Caco-2 (cell line): ENCODE measurements at regions of chr13 and their contacts with region 1.

Region 1: DNA sequence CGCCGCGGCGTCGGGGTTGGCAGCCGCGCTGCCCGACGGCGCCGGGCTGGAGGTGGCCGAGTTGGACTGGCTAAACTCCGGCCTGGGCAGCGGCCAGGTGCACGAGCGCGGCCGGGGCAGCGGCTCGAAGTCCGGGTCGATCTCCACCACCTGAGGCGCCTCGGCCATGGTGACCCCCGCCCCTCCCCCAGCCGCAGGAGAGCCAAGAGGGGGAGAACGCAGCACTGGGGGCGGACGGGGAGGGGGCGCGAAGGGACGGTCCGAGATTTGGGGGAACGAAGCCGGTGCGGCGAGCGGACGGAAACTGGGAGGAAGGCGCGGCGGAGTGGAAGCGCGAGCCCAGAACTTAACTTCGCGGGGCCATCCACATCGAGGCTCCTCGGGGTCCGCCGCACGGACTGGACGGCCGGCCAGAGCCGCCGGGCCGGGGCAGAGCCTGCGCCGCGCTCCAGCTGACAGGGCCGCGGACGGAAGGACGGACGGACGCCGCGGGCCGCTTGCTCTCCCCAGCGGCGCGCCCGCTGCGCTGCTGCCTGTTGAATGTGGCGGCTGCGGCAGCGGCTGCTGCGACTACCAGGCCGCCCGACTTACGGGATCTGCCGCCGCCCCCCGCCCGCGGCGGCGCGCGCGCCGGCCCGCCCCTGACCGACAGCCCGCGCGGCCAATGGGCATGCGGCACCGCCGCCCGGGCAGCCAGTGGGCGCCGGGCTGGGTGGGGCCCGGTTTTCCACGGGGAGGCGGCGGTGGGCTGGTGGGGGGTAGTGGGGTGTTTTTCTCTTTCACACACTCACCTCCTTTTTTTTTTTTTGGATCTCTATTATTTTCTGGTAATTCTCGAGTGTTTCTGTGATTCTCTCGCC is at the start of gene FOXO1:
- DNase-seq: peak; percentile 86 to 97
- H3K4me3 ChIP-seq: peak within 1 kb of the TSS; percentile 63
- H3K4me3 Mint-ChIP-seq: peak within 1 kb of the TSS; percentile 92
- H3K27ac Mint-ChIP-seq: peak within 1 kb of the TSS; percentile 57
- H3K4me1 ChIP-seq: peaks cover 7% of the 10 kb centered on the region; the same call in 1 of the 2 replicates
- H3K4me1 Mint-ChIP-seq: peaks cover 7% of the 10 kb centered on the region
- H3K27me3 ChIP-seq: no peaks in the 10 kb centered on the region
- H3K27me3 Mint-ChIP-seq: no peaks in the 10 kb centered on the region
- CTCF ChIP-seq: no peak
- total RNA-seq, gene FOXO1: 10.4 and 11.4 TPM in 2 replicates

Region 2: GRCh38 chr13:40344270-40345148 is 321.8 kb before region 1 on chr13:
- CTCF ChIA-PET with region 1: no interaction called
- POLR2A ChIA-PET with region 1: no interaction called
- intact Hi-C with region 1: loop called (anchors 2 kb)
- DNase-seq: no peak
- H3K4me3 ChIP-seq: no peak overlapping the region
- H3K4me3 Mint-ChIP-seq: no peak overlapping the region
- H3K27ac Mint-ChIP-seq: peak overlapping the region; percentile 26
- H3K4me1 ChIP-seq: peaks cover 46% of the 10 kb centered on the region
- H3K4me1 Mint-ChIP-seq: peaks cover 56% of the 10 kb centered on the region
- H3K27me3 ChIP-seq: no peaks in the 10 kb centered on the region
- H3K27me3 Mint-ChIP-seq: no peaks in the 10 kb centered on the region
- CTCF ChIP-seq: no peak

Region 3: DNA sequence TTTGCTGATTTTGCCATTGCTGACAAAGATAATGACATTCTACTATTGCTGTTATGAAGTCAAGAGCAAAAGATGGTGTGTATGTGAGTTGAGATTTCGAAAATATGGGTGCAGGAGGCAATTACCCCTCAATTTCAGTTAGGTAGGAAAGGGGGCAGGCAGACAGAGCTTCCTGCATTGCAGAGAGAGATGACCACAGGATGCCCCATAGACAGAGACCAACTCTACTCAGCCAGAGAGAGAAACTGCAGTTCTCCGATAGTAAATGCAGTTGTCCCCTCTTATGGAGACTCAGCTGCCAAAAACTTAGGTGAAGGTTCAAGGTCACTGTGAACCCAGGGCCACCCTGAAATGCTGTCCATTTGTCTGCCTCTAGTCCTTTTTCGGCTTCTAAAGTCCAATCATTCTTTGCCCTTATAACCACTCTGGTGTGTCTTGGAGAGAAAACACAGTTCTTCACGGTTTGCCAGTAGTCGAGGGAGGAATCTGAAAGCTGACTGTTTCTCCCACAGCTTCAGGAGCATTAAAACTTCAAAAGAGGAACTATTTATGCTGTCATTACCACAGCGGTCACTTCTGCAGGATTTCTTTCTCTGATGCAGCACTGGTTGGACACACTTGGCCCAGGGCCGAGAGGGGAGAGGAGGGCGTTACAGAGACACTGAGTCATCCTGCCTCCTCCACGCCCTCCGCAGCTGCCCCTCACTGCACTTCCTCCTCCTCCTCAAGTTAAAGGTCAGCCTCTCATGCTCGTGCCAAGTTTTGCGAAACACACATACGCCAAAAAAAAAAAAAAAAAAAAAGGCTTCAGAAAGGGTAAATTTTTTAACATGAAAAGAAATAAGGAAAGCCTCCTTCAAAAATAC is 264.1 kb before region 1 on chr13:
- CTCF ChIA-PET with region 1: no interaction called
- POLR2A ChIA-PET with region 1: interaction called, 5 read pairs
- intact Hi-C with region 1: loop called (anchors 10 kb)
- DNase-seq: peak; percentile 36 to 76
- H3K4me3 ChIP-seq: no peak overlapping the region
- H3K4me3 Mint-ChIP-seq: no peak overlapping the region
- H3K27ac Mint-ChIP-seq: peak overlapping the region; percentile 8
- H3K4me1 ChIP-seq: peaks cover 33% of the 10 kb centered on the region
- H3K4me1 Mint-ChIP-seq: peaks cover 39% of the 10 kb centered on the region
- H3K27me3 ChIP-seq: no peaks in the 10 kb centered on the region
- H3K27me3 Mint-ChIP-seq: no peaks in the 10 kb centered on the region
- CTCF ChIP-seq: no peak

Region 4: DNA sequence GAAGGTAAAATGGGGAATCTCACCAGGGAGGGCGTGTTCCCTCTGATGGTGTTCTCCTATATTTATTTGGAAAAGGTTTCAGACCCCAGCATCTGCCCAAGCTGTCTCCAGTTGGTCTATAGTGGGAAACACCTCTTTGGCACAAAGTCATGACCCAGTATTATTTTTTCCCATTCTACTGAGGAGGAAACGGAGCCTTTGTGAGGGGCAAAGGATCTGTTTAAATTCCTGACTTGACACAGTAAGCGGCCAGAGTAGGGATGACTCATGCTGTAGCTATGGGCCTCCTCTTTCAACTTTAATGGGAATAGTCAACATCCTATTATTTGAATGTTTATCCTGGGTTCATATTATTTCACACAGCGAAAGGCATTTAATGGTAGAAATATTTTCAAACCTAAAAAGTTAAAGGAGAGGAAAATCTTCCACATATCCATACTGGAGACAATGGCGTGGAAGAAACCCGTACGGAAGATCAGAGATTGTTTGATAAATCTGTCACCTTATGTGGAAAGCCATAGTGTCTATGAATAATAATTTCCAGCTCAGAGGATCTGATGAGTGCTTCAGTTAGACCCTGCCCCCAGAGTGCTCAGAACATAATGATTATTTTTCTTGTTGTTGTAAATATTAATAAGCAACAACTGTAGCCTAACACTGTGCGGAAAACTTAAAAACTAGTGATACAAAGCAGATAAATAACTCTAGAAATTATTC is 125.8 kb before region 1 on chr13:
- CTCF ChIA-PET with region 1: interaction called, 5 read pairs
- POLR2A ChIA-PET with region 1: no interaction called
- intact Hi-C with region 1: loop called (anchors 2 kb)
- DNase-seq: peak; percentile 63 to 69
- H3K4me3 ChIP-seq: no peak overlapping the region
- H3K4me3 Mint-ChIP-seq: peak overlapping the region; percentile 55
- H3K27ac Mint-ChIP-seq: peak overlapping the region; percentile 93
- H3K4me1 ChIP-seq: peaks cover 41% of the 10 kb centered on the region
- H3K4me1 Mint-ChIP-seq: peaks cover 25% of the 10 kb centered on the region
- H3K27me3 ChIP-seq: no peaks in the 10 kb centered on the region
- H3K27me3 Mint-ChIP-seq: no peaks in the 10 kb centered on the region
- CTCF ChIP-seq: no peak

Region 5: DNA sequence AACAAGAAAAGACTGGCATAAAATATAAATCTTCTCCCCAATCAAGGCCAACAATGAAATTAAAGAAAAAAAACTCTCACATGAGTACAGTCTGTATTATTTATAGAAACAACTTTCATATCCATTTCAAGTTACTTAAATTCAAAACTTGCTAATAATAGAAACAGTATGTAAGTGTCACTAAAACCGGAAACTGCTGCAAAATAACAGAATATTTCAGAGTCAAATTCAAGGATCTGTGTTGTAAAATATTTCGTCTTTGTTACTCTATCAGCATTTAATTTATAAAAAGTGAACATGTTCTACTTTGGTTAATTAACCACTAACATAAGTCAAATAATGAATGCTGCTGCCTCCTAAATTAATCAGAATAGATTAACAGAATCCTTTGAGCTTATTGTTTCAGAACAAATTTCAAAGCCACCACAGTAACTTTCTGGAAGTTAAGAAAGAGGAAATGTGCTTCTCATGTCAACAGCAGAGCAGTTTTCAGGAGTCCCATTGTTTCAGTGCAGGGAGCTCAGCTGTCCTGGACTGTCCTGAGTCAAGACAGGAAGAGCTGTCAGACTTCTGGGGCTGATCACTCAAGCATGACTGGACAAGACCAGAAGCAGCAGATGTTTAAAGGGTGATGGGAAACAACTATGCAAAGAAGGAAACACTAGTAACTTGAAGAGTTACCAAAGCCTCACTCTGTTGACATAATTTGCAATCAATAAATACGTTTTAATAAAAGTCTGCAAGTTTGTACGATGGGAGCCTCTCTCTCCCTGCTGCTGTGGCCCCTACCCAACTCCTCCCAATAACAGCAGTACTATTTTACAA is 76.8 kb before region 1 on chr13:
- CTCF ChIA-PET with region 1: no interaction called
- POLR2A ChIA-PET with region 1: interaction called, 3 read pairs
- intact Hi-C with region 1: loop called (anchors 2 kb)
- DNase-seq: no peak
- H3K4me3 ChIP-seq: no peak overlapping the region
- H3K4me3 Mint-ChIP-seq: no peak overlapping the region
- H3K27ac Mint-ChIP-seq: no peak overlapping the region
- H3K4me1 ChIP-seq: peaks cover 48% of the 10 kb centered on the region
- H3K4me1 Mint-ChIP-seq: peaks cover 34% of the 10 kb centered on the region
- H3K27me3 ChIP-seq: no peaks in the 10 kb centered on the region
- H3K27me3 Mint-ChIP-seq: no peaks in the 10 kb centered on the region
- CTCF ChIP-seq: no peak

Region 6: GRCh38 chr13:40595693-40596092 is 70.6 kb before region 1 on chr13:
- CTCF ChIA-PET with region 1: no interaction called
- POLR2A ChIA-PET with region 1: no interaction called
- intact Hi-C with region 1: loop called (anchors 2 kb)
- DNase-seq: no peak
- H3K4me3 ChIP-seq: no peak overlapping the region
- H3K4me3 Mint-ChIP-seq: no peak overlapping the region
- H3K27ac Mint-ChIP-seq: no peak overlapping the region
- H3K4me1 ChIP-seq: peaks cover 20% of the 10 kb centered on the region
- H3K4me1 Mint-ChIP-seq: peaks cover 38% of the 10 kb centered on the region
- H3K27me3 ChIP-seq: no peaks in the 10 kb centered on the region
- H3K27me3 Mint-ChIP-seq: no peaks in the 10 kb centered on the region
- CTCF ChIP-seq: no peak

Region 7: DNA sequence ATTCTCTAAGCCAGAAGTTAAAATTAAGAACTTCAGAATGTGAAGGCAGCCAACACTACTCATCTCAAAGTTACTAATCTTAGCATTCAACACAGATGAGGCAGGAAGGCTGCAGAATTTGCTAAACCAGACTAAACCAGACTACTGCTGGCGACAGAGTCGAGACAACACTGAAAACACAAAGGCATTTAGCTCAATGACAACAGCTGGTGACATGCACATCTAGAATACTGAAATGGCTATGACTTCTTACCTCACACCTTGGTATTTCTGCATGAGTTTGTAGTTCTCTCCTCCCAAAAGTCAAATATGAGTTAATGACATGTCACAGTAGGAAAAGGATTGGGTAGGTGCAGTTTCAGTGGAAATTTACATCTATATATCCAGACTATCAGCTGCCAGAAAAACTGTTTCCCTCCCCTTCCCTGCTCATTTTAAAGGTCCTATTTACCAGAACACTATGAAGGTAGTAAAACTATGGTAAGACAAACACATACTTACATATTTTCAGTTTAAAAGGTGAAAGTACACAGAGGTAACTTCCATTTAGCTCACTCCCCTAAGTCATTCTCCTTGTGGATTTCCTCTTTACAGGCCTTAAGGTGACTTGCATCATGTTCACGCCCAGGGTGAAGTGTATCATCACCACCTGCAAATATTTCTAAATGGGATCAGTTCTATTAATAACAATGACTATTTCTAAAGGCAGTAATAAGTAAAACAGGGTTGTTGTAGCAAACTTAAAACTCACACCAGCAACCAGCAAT is 21.3 kb before region 1 on chr13:
- CTCF ChIA-PET with region 1: interaction called, 3 read pairs
- POLR2A ChIA-PET with region 1: interaction called, 4 read pairs
- intact Hi-C with region 1: loop called (anchors 1 kb)
- DNase-seq: peak in 1 of 2 experiments; percentile 61
- H3K4me3 ChIP-seq: no peak overlapping the region
- H3K4me3 Mint-ChIP-seq: peak overlapping the region; percentile 43
- H3K27ac Mint-ChIP-seq: peak overlapping the region; percentile 89
- H3K4me1 ChIP-seq: peaks cover 30% of the 10 kb centered on the region
- H3K4me1 Mint-ChIP-seq: peaks cover 25% of the 10 kb centered on the region
- H3K27me3 ChIP-seq: no peaks in the 10 kb centered on the region
- H3K27me3 Mint-ChIP-seq: no peaks in the 10 kb centered on the region
- CTCF ChIP-seq: no peak